ENCODE measurements at regions of chr15 and their contacts with region 1.

Region 1: GRCh38 chr15:85667491-85668424 is 127.0 kb downstream of the KLHL25 start:
- DNase-seq: peak in 3 of 5 donors; percentile 53 to 69 (median 57)
- ATAC-seq: peak; percentile 36 to 90 (median 88)
- H3K4me3 ChIP-seq: peak overlapping the region in 1 of 12 donors; percentile 14
- H3K27ac ChIP-seq: peak overlapping the region; percentile 26 to 93 (median 82)
- H3K4me1 ChIP-seq: peaks cover 7 to 59% (median 46%) of the 10 kb centered on the region in 12 donors
- H3K27me3 ChIP-seq: no peaks in the 10 kb centered on the region
- CTCF ChIP-seq: no peak
- POLR2A ChIP-seq: no peak

Region 2: GRCh38 chr15:85597155-85597815 is 70.5 kb before region 1 on chr15:
- intact Hi-C with region 1: no loop called
- DNase-seq: no peak
- ATAC-seq: no peak
- H3K4me3 ChIP-seq: no peak overlapping the region
- H3K27ac ChIP-seq: peak overlapping the region in 3 of 12 donors; percentile 13 to 64 (median 58)
- H3K4me1 ChIP-seq: peaks cover 3 to 72% (median 54%) of the 10 kb centered on the region in 12 donors
- H3K27me3 ChIP-seq: no peaks in the 10 kb centered on the region
- CTCF ChIP-seq: no peak
- POLR2A ChIP-seq: no peak

Region 3: GRCh38 chr15:85607842-85608241 is 59.9 kb before region 1 on chr15:
- intact Hi-C with region 1: no loop called
- DNase-seq: peak in 1 of 5 donors; percentile 61
- ATAC-seq: peak; percentile 43 to 86 (median 80)
- H3K4me3 ChIP-seq: no peak overlapping the region
- H3K27ac ChIP-seq: peak overlapping the region in 11 of 12 donors; percentile 29 to 85 (median 71)
- H3K4me1 ChIP-seq: peaks cover 12 to 67% (median 43%) of the 10 kb centered on the region in 12 donors
- H3K27me3 ChIP-seq: no peaks in the 10 kb centered on the region
- CTCF ChIP-seq: no peak
- POLR2A ChIP-seq: no peak

Region 4: DNA sequence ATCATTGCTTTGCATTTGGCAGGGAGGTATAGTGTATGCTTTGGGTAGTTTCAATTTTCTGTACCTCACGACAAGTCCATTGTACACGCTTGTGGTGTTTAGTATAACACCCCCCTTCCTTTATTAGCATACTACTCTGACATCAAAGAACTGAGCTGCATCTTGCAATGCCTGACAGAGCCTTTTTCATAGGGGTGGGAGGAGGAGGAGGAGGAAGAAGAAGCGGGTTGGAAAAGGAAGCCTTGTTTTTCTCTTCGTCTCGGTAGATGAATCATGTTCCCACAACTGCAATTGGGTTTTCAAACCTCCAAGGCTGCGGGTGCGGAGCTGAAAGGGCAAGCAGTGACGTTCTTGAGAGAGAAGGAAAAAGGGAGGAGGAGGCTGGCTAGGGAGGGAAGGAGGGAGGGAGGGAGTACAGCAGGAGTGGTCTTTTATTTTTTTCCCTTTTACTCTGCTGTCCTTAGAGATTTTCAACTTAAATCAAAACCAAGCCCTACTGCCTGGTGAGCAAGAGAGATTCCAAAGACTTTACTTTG is 48.7 kb before region 1 on chr15:
- intact Hi-C with region 1: loop called in 4 of 10 experiments (anchors 1 to 5 kb)
- DNase-seq: peak; percentile 77 to 86 (median 81)
- ATAC-seq: peak; percentile 55 to 88 (median 77)
- H3K4me3 ChIP-seq: peak overlapping the region in 11 of 12 donors; percentile 14 to 69 (median 56)
- H3K27ac ChIP-seq: peak overlapping the region; percentile 68 to 91 (median 82)
- H3K4me1 ChIP-seq: peaks cover 21 to 100% (median 96%) of the 10 kb centered on the region in 12 donors
- H3K27me3 ChIP-seq: no peaks in the 10 kb centered on the region
- CTCF ChIP-seq: no peak
- POLR2A ChIP-seq: peak in 1 of 2 donors; percentile 56

Region 5: DNA sequence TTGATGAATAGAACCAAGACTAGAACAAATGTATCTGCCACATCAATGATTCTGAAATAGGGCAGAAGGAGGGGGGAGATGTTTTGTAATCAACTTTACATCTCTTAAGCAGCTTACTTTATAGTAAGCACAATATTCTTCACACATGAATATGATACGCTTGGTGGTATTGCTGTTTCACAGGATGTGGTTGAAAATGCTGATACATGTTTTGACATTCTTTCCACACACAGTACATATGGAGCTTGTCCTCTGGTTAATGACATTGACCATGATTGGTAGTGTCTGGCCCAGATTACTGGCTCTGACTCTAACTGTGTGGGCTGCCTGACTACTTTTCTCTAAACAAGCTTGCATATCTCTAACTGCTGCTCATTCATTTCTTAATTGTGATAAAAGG is 41.9 kb before region 1 on chr15:
- intact Hi-C with region 1: loop called in 4 of 10 experiments (anchors 1 to 5 kb)
- DNase-seq: no peak
- ATAC-seq: peak in 3 of 4 donors; percentile 12 to 46 (median 36)
- H3K4me3 ChIP-seq: no peak overlapping the region
- H3K27ac ChIP-seq: peak overlapping the region; percentile 31 to 91 (median 82)
- H3K4me1 ChIP-seq: peaks cover 16 to 98% (median 84%) of the 10 kb centered on the region in 12 donors
- H3K27me3 ChIP-seq: no peaks in the 10 kb centered on the region
- CTCF ChIP-seq: no peak
- POLR2A ChIP-seq: no peak

Measured in heart left ventricle (tissue), 16 donors.